Adrenal gland (tissue), 19 donors: ENCODE measurements at regions of chr11 and their contacts with region 1.

Region 1: GRCh38 chr11:108933630-108934029 is 268.8 kb downstream of the DDX10 start:
- DNase-seq: no peak
- H3K4me3 ChIP-seq: no peak overlapping the region
- H3K27ac ChIP-seq: no peak overlapping the region
- H3K4me1 ChIP-seq: no peaks in the 10 kb centered on the region
- H3K27me3 ChIP-seq: no peaks in the 10 kb centered on the region
- CTCF ChIP-seq: no peak
- POLR2A ChIP-seq: no peak

Region 2: GRCh38 chr11:108788565-108789199 is 144.9 kb before region 1 on chr11:
- intact Hi-C with region 1: no loop called
- DNase-seq: peak in 6 of 7 donors; percentile 11 to 57 (median 26)
- H3K4me3 ChIP-seq: no peak overlapping the region
- H3K27ac ChIP-seq: no peak overlapping the region
- H3K4me1 ChIP-seq: no peaks in the 10 kb centered on the region
- H3K27me3 ChIP-seq: no peaks in the 10 kb centered on the region
- CTCF ChIP-seq: peak; percentile 8 to 48 (median 40)
- POLR2A ChIP-seq: no peak

Region 3: GRCh38 chr11:108853864-108854263 is 79.8 kb before region 1 on chr11:
- intact Hi-C with region 1: no loop called
- DNase-seq: peak in 2 of 7 donors; percentile 9 to 21
- H3K4me3 ChIP-seq: peak overlapping the region in 1 of 4 donors; percentile 35
- H3K27ac ChIP-seq: no peak overlapping the region
- H3K4me1 ChIP-seq: peaks cover 7 to 20% of the 10 kb centered on the region in 2 donors
- H3K27me3 ChIP-seq: no peaks in the 10 kb centered on the region
- CTCF ChIP-seq: no peak
- POLR2A ChIP-seq: no peak

Region 4: DNA sequence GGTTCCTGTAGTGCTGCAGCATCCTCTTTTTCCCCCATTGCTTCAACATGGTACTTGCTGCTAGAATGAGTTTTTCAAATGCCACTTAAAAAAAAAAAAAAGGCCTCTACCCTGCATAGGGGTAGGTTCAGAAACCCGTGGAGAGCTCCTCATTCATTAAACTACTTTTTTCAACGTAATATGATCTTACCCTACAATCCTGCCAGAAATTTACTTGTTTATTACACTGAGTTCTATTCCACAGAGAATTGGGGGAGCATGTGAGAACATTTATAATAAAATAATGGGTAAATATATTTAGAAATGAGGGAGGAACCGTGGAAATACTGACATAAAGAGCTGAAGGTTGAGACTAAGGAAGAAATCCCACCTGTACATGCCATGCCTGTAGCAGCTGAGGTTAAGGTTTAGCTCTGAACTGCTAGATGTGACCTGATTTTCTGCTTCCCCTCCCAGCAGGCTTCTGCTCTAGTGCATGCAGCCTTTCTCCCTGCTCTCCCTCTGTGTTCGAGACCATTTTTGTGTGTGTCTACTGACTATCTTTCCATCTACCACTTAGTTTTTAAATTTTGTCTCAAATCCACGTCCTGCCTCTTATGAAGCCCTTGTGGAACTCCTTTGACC is 43.0 kb before region 1 on chr11:
- intact Hi-C with region 1: loop called in 1 of 2 experiments (anchors 5 kb)
- DNase-seq: no peak
- H3K4me3 ChIP-seq: no peak overlapping the region
- H3K27ac ChIP-seq: no peak overlapping the region
- H3K4me1 ChIP-seq: no peaks in the 10 kb centered on the region
- H3K27me3 ChIP-seq: no peaks in the 10 kb centered on the region
- CTCF ChIP-seq: no peak
- POLR2A ChIP-seq: no peak